ENCODE measurements at regions of chr14 and their contacts with region 1.

Region 1: GRCh38 chr14:44081146-44081545 is 425.9 kb downstream of the FSCB start:
- DNase-seq: no peak

Region 2: GRCh38 chr14:44112774-44113460 is 31.8 kb after region 1 on chr14:
- intact Hi-C with region 1: no loop called
- DNase-seq: no peak

Region 3: DNA sequence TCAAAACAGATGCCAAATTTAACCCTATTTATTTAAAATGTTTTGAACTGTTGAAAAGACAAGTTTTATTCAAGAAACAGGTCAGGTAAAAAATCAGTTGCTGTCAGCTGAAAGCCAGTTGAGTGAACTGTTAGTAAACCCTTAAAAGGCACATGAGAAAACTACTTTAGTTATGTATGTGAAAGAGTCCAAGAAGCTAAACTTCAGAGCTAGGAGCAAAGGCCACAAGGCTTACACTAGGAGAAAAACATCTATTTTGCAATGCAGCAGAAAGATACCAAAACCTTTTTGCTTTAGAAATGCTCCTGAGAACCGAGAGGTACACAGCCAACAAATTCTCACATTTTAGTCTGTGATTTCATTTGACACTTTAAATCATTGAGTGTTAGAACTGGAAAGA is 50.7 kb after region 1 on chr14:
- intact Hi-C with region 1: loop called in 1 of 2 experiments (anchors 2 kb)
- DNase-seq: no peak

Region 4: GRCh38 chr14:44379292-44379915 is 298.3 kb after region 1 on chr14:
- intact Hi-C with region 1: no loop called
- DNase-seq: no peak

Region 5: DNA sequence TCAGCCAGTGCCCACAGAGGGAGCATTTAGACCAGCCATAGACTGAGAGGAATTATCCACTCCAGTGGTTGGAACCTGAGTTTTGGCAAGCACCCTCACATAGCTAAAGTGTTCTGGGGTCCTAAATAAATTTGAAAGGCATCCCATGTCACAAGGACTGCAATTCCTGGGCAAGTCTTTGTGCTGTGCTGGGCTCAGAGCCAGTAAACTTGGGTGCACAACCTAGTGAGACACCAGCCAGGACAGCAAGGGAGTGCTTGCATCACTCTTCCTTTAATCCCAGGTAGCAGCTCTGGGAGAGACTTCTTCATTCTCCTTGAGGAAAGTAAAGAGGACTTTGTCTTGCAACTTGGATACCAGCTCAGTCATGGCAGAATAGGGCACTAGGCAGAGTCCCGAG is 567.9 kb after region 1 on chr14:
- intact Hi-C with region 1: loop called in 1 of 2 experiments (anchors 5 kb)
- DNase-seq: no peak